GM12878 (cell line): ENCODE measurements at regions of chr1 and their contacts with region 1.

Region 1: GRCh38 chr1:14571819-14572767 is 26.4 kb upstream of the KAZN start:
- DNase-seq: no peak
- ATAC-seq: peak; percentile 88
- H3K4me3 ChIP-seq: no peak overlapping the region
- H3K27ac ChIP-seq: no peak overlapping the region
- H3K4me1 ChIP-seq: no peaks in the 10 kb centered on the region
- H3K27me3 ChIP-seq: no peaks in the 10 kb centered on the region
- CTCF ChIP-seq: peak; percentile 51 to 75 (median 51); a peak in 5 of 6 replicates
- EP300 ChIP-seq: no peak
- POLR2A ChIP-seq: no peak
- RAD21 ChIP-seq: peak; percentile 86

Region 2: GRCh38 chr1:14108356-14109275 is 463.5 kb before region 1 on chr1:
- CTCF ChIA-PET with region 1: interaction called, 10 read pairs
- POLR2A ChIA-PET with region 1: no interaction called
- RAD21 ChIA-PET with region 1: interaction called, 5 read pairs
- SMC1A ChIA-PET with region 1: interaction called, 5 read pairs
- in situ Hi-C with region 1: loop called (anchors 10 kb)
- intact Hi-C with region 1: no loop called
- DNase-seq: no peak
- ATAC-seq: no peak
- H3K4me3 ChIP-seq: no peak overlapping the region
- H3K27ac ChIP-seq: no peak overlapping the region
- H3K4me1 ChIP-seq: no peaks in the 10 kb centered on the region
- H3K27me3 ChIP-seq: peaks cover 0 to 2% of the 10 kb centered on the region in 2 experiments; a peak in 1 of 4 replicates
- CTCF ChIP-seq: no peak
- EP300 ChIP-seq: no peak
- POLR2A ChIP-seq: no peak
- RAD21 ChIP-seq: no peak

Region 3: GRCh38 chr1:14113841-14114567 is 458.1 kb before region 1 on chr1:
- CTCF ChIA-PET with region 1: interaction called, 10 read pairs
- POLR2A ChIA-PET with region 1: no interaction called
- RAD21 ChIA-PET with region 1: interaction called, 5 read pairs
- SMC1A ChIA-PET with region 1: interaction called, 5 read pairs
- in situ Hi-C with region 1: loop called (anchors 10 kb)
- intact Hi-C with region 1: loop called (anchors 2 kb)
- DNase-seq: no peak
- ATAC-seq: peak; percentile 48; the same call in 2 of the 3 replicates
- H3K4me3 ChIP-seq: no peak overlapping the region
- H3K27ac ChIP-seq: no peak overlapping the region
- H3K4me1 ChIP-seq: no peaks in the 10 kb centered on the region
- H3K27me3 ChIP-seq: no peaks in the 10 kb centered on the region
- CTCF ChIP-seq: peak; percentile 29 to 58 (median 50); a peak in 4 of 6 replicates
- EP300 ChIP-seq: no peak
- POLR2A ChIP-seq: no peak
- RAD21 ChIP-seq: peak; percentile 57

Region 4: GRCh38 chr1:14390816-14391215 is 181.3 kb before region 1 on chr1:
- CTCF ChIA-PET with region 1: no interaction called
- POLR2A ChIA-PET with region 1: no interaction called
- RAD21 ChIA-PET with region 1: no interaction called
- SMC1A ChIA-PET with region 1: no interaction called
- in situ Hi-C with region 1: no loop called
- intact Hi-C with region 1: loop called (anchors 10 kb)
- DNase-seq: no peak
- ATAC-seq: no peak
- H3K4me3 ChIP-seq: no peak overlapping the region
- H3K27ac ChIP-seq: no peak overlapping the region
- H3K4me1 ChIP-seq: no peaks in the 10 kb centered on the region
- H3K27me3 ChIP-seq: no peaks in the 10 kb centered on the region
- CTCF ChIP-seq: no peak
- EP300 ChIP-seq: no peak
- POLR2A ChIP-seq: no peak
- RAD21 ChIP-seq: no peak

Region 5: DNA sequence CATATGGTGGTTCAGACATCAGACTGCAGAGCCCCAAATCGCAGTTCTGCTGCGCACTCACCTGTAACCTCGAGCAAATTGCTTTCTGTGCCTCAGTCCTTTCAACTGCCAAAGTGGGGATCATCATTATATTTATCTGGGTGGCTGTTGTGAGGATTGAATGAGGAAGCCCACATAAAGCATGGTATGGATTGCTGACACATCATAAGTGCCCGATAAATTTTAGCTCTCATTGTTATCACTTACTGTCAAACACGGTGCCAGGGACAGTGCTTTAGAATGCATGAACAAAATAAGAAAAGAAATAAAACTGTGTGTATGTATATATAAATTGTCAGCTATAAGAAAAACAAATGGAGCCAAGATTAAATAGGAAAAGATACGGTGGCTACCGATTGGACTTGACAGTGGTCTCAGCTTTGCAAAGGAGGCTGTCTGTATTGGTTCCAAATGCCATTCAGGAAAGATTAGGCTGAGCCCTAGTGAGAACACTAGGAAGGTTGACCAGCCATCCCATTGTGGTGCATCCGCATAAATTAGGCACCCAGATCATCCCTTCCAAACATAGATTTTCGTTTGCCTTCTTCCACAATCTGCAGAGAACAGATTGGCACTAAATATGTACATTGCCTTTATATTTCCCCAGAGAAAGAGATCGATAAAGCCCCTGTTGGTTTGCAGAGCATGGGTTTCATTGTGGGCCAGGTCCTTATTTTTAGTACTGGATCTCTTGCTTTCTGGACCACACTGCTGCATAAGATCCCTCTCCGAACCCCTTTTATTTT is 65.4 kb before region 1 on chr1:
- CTCF ChIA-PET with region 1: no interaction called
- POLR2A ChIA-PET with region 1: no interaction called
- RAD21 ChIA-PET with region 1: no interaction called
- SMC1A ChIA-PET with region 1: no interaction called
- in situ Hi-C with region 1: no loop called
- intact Hi-C with region 1: no loop called
- DNase-seq: no peak
- ATAC-seq: no peak
- H3K4me3 ChIP-seq: no peak overlapping the region
- H3K27ac ChIP-seq: no peak overlapping the region
- H3K4me1 ChIP-seq: no peaks in the 10 kb centered on the region
- H3K27me3 ChIP-seq: no peaks in the 10 kb centered on the region
- CTCF ChIP-seq: no peak
- EP300 ChIP-seq: no peak
- POLR2A ChIP-seq: no peak
- RAD21 ChIP-seq: no peak